ENCODE measurements at regions of chr17 and their contacts with region 1.

Region 1: DNA sequence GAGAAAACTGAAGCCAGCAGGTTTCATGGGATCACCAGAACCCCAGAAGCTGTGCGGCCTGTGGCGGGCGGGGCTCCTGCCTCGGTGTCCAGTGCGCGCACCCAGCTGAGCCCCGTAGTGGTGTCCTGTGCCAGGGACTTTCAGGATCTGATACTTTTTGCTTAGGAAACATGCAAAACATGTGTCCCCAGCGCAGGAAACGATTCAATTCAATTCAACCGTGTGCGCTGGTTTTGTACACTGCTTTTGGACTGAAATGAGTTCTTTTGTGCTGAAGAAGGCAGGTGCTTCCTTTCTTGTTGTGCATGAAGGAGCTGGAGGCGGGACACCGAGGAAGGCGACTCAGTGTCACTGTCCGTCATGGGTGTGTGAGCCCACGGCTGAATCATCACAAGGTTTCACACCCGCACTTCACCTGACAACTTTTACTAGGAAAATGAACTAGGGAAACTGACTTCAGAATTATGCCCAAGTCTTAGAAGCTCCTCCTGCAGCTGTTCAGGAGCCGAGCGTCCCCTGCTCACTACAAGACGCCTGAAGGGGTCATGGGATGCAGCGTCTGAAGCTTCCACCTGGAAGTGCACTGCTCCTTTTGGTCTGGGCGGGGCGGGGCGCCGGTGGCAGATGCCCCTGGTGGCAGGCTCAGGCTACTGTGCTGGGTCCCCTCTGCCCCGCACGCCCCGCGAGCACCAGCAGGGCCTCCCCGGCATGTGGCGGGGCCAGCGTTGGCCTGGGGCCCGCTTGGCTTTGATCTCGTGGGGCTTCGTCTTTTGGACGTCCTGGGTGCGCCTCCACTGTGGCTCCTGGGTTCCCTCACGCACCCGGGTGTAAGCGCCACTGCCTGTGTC is 31.5 kb upstream of the ZNF750 start:
- DNase-seq: peak; percentile 87
- CTCF ChIP-seq: peak; percentile 9

Region 2: GRCh38 chr17:82551779-82552457 is 319.4 kb before region 1 on chr17:
- CTCF ChIA-PET with region 1: no interaction called
- POLR2A ChIA-PET with region 1: no interaction called
- DNase-seq: peak; percentile 91
- CTCF ChIP-seq: peak; percentile 78

Region 3: GRCh38 chr17:82884970-82885353 is 13.7 kb after region 1 on chr17:
- CTCF ChIA-PET with region 1: interaction called, 18 read pairs
- POLR2A ChIA-PET with region 1: no interaction called
- DNase-seq: no peak
- CTCF ChIP-seq: no peak